Mammary epithelial cell (primary cell): ENCODE measurements at regions of chr7 and their contacts with region 1.

Region 1: DNA sequence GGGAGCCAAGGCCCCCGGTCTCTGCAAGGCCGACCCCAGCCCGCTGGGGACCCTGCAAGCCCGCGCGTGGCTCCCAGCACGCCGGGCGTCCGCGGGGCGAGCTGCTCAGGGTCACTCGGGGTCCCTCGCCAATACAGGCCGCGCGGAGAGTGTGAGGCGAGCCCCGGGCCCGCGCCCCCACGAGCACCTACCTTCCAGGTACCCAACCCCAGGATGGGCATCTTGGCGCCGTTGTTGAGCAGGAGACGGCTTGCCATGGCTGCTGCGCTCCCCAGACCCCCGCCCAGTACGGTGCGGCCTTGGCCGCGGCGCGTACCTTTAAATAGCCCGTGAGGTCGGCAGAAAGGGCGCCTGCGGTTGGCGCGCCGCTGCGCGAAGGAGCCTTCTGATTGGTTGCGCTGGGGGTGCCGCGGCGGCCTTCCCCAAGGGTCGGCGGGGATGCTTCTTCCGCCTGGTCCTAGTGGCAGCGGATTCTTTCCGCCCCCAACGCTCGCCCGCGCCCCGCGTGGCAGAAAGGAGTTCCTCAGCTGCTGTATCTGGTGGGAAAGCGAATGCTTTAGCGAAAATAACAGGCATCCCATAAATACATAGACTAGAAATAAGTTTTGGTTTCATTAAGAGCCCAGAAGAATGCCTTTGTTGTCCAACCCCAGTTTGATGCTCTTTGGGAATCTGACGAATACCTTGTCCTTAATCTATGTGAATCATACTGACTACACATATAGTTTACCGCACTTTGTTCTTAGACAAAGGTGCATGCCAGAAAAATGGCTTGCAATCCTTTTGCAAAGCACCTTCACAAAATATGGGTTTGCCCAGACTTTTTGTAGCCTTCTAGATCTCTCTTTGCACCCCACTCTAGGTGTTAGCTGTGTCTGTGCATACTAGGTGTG is at the start of gene AKR1B1:
- DNase-seq: peak; percentile 86
- H3K4me3 ChIP-seq: peak within 1 kb of the TSS; percentile 62 to 71 (median 68)
- H3K27ac ChIP-seq: peak within 1 kb of the TSS; percentile 58
- H3K4me1 ChIP-seq: peaks cover 19% of the 10 kb centered on the region
- H3K27me3 ChIP-seq: no peaks in the 10 kb centered on the region
- CTCF ChIP-seq: peak; percentile 34 to 57
- total RNA-seq, gene AKR1B1: 78.9 to 137 TPM

Region 2: GRCh38 chr7:134443396-134444070 is 15.5 kb before region 1 on chr7:
- CTCF ChIA-PET with region 1: no interaction called
- dilution Hi-C with region 1: no loop called
- in situ Hi-C with region 1: no loop called
- intact Hi-C with region 1: loop called (anchors 1 kb)
- DNase-seq: peak; percentile 95
- H3K4me3 ChIP-seq: no peak overlapping the region
- H3K27ac ChIP-seq: peak overlapping the region; percentile 89
- H3K4me1 ChIP-seq: peaks cover 36% of the 10 kb centered on the region
- H3K27me3 ChIP-seq: no peaks in the 10 kb centered on the region
- CTCF ChIP-seq: no peak

Region 3: DNA sequence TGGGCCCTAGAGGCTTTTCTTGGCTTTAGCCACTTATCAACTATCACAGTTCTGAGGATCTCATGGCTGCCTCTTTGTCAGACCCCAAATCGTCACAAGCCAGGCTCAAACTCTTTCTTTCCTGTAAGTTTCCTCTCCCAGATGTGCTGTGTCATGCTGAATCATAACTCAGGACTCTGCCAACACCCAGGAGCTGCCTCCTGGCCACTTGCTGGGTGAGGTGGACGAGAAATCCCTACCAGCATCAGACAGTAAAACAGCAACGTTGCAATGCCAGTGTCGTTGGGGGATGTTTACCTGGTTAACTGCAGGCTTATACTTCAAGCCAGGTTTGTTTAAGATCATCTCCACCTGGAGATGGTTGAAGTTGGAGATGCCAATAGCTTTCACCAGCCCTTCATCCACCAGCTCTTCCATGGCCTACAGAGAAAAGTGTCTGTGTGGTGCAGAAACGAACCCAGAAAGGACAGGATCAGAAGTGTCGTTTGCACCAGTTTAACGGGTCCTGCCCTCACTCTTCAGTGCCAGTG is 10.3 kb before region 1 on chr7:
- CTCF ChIA-PET with region 1: no interaction called
- dilution Hi-C with region 1: no loop called
- in situ Hi-C with region 1: no loop called
- intact Hi-C with region 1: loop called (anchors 1 kb)
- DNase-seq: peak; percentile 90
- H3K4me3 ChIP-seq: no peak overlapping the region
- H3K27ac ChIP-seq: peak overlapping the region; percentile 89
- H3K4me1 ChIP-seq: peaks cover 40% of the 10 kb centered on the region
- H3K27me3 ChIP-seq: no peaks in the 10 kb centered on the region
- CTCF ChIP-seq: no peak

Region 4: GRCh38 chr7:134480736-134481135 is 21.7 kb after region 1 on chr7:
- CTCF ChIA-PET with region 1: interaction called, 6 read pairs
- dilution Hi-C with region 1: no loop called
- in situ Hi-C with region 1: no loop called
- intact Hi-C with region 1: loop called (anchors 2 kb)
- DNase-seq: peak; percentile 36
- H3K4me3 ChIP-seq: no peak overlapping the region
- H3K27ac ChIP-seq: no peak overlapping the region
- H3K4me1 ChIP-seq: peaks cover 15% of the 10 kb centered on the region
- H3K27me3 ChIP-seq: no peaks in the 10 kb centered on the region
- CTCF ChIP-seq: no peak

Region 5: DNA sequence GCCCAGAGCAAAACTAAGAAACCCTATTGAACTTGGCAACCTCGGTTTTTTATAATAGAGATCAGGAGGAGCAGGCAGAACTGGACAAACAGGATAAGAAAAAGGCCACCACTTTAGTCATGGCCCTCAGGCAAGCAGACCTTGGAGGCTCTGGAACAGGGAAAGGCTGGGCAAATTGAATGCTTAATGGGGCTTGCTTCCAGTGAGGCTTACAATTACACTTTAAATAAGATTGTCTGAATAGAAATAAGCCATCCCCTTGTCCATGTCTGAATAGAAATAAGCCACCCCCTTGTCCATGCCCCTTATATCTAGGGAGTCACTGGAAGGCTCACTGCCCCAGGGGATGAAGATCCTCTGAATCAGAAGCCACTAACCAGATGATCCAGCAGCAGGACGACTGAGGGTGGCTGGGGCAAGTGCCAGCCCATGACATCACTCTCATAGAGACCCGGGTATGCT is 130.5 kb after region 1 on chr7:
- CTCF ChIA-PET with region 1: no interaction called
- dilution Hi-C with region 1: no loop called
- in situ Hi-C with region 1: no loop called
- intact Hi-C with region 1: no loop called
- DNase-seq: peak; percentile 79
- H3K4me3 ChIP-seq: no peak overlapping the region
- H3K27ac ChIP-seq: peak overlapping the region; percentile 11
- H3K4me1 ChIP-seq: peaks cover 17% of the 10 kb centered on the region
- H3K27me3 ChIP-seq: no peaks in the 10 kb centered on the region
- CTCF ChIP-seq: no peak